ENCODE measurements at regions of chr10 and their contacts with region 1.

Region 1: GRCh38 chr10:31590023-31590800 is 271.2 kb downstream of the ZEB1 start:
- DNase-seq: no peak

Region 2: DNA sequence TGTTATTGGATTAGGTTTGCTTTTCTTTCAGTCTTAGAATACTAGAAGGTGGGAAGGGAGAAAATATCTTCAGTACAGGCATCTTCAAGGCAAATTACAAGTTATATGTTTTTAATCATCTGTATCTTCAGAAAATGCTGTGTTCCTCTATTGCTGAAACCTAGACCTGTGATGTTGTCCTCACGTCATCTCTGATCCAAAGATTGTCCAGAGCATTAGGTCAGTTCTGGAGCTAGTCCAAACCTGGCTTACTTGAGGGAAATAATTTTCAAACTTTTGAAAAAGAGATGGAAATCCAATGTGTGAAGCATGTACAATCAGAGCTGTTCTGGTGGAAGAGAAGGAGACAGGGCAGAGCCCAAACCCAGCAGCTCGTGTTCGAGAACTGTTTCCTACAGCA is 53.9 kb before region 1 on chr10:
- intact Hi-C with region 1: loop called in 1 of 2 experiments (anchors 2 kb)
- DNase-seq: no peak